Mammary epithelial cell (primary cell): ENCODE measurements at regions of chr19 and their contacts with region 1.

Region 1: GRCh38 chr19:43028861-43029260 is 2.6 kb upstream of the PSG11 start:
- DNase-seq: no peak
- H3K4me3 ChIP-seq: no peak overlapping the region
- H3K27ac ChIP-seq: no peak overlapping the region
- H3K4me1 ChIP-seq: peaks cover 3% of the 10 kb centered on the region
- H3K27me3 ChIP-seq: no peaks in the 10 kb centered on the region
- CTCF ChIP-seq: no peak

Region 2: GRCh38 chr19:42926781-42927180 is 102.1 kb before region 1 on chr19:
- CTCF ChIA-PET with region 1: no interaction called
- dilution Hi-C with region 1: loop called (anchors 5 kb)
- in situ Hi-C with region 1: loop called in 1 of 2 experiments (anchors 10 kb)
- intact Hi-C with region 1: loop called (anchors 1 kb)
- DNase-seq: no peak
- H3K4me3 ChIP-seq: no peak overlapping the region
- H3K27ac ChIP-seq: no peak overlapping the region
- H3K4me1 ChIP-seq: peaks cover 8% of the 10 kb centered on the region
- H3K27me3 ChIP-seq: no peaks in the 10 kb centered on the region
- CTCF ChIP-seq: no peak

Region 3: GRCh38 chr19:43070875-43071274 is 42.0 kb after region 1 on chr19:
- CTCF ChIA-PET with region 1: no interaction called
- dilution Hi-C with region 1: loop called (anchors 5 kb)
- in situ Hi-C with region 1: no loop called
- intact Hi-C with region 1: no loop called
- DNase-seq: no peak
- H3K4me3 ChIP-seq: no peak overlapping the region
- H3K27ac ChIP-seq: no peak overlapping the region
- H3K4me1 ChIP-seq: no peaks in the 10 kb centered on the region
- H3K27me3 ChIP-seq: no peaks in the 10 kb centered on the region
- CTCF ChIP-seq: no peak

Region 4: GRCh38 chr19:43080186-43080585 is 51.3 kb after region 1 on chr19:
- CTCF ChIA-PET with region 1: no interaction called
- dilution Hi-C with region 1: no loop called
- in situ Hi-C with region 1: loop called in 1 of 2 experiments (anchors 10 kb)
- intact Hi-C with region 1: loop called (anchors 1 kb)
- DNase-seq: no peak
- H3K4me3 ChIP-seq: no peak overlapping the region
- H3K27ac ChIP-seq: no peak overlapping the region
- H3K4me1 ChIP-seq: peaks cover 23% of the 10 kb centered on the region
- H3K27me3 ChIP-seq: no peaks in the 10 kb centered on the region
- CTCF ChIP-seq: no peak

Region 5: DNA sequence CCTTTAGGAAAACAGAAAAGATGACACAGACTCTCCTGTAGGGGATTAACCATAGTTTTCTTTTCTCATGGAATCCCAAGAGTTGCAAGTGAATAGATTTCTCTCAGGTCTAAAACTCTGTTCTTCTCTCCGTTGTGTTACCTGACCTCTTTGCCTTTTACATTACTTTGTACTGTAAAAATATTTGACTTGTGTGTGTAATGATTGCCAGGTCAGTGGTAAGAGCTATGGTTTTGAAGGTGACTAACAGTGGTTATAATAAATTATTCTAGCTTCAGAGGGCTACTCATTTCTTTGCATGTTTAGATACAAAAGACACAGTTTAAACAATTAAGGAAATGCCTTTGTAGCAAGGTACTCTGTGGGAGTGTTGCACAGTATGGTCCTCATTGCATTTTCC is 76.6 kb after region 1 on chr19:
- CTCF ChIA-PET with region 1: no interaction called
- dilution Hi-C with region 1: no loop called
- in situ Hi-C with region 1: no loop called
- intact Hi-C with region 1: no loop called
- DNase-seq: no peak
- H3K4me3 ChIP-seq: no peak overlapping the region
- H3K27ac ChIP-seq: no peak overlapping the region
- H3K4me1 ChIP-seq: no peaks in the 10 kb centered on the region
- H3K27me3 ChIP-seq: no peaks in the 10 kb centered on the region
- CTCF ChIP-seq: no peak